ENCODE measurements at regions of chr6 and their contacts with region 1.

Region 1: DNA sequence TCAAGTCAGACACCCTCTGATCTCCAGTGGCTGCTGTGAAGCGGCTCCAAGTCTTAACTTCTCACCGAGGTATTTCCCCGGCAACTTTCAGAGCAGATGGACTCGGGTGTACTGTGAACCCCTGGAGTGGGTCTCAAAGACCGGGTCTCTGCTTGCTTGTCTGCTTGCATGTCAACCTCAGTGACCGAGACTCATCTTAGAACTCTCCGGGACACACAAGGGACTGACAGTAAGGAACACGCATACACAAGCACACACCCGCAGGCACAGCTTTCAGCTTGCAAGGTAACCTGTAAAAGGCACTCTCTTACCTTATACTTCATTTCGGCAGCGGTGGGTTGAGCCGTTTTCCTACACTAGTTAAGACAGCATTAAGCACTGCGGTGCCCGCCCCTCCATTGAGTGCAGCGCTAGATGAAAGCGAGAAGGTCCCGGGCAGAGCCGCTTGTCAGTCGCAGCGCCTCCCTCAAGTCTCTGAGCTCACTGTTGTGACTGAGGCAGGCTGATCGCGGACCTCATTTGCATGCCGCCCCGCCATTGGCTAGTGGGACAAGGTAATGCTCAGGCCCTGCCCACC is at the start of gene NEDD9:
- DNase-seq: peak; percentile 94 to 96
- H3K4me3 ChIP-seq: peak within 1 kb of the TSS; percentile 62
- H3K4me3 Mint-ChIP-seq: peak within 1 kb of the TSS; percentile 78
- H3K27ac Mint-ChIP-seq: peak within 1 kb of the TSS; percentile 85
- H3K4me1 ChIP-seq: peaks cover 32% of the 10 kb centered on the region
- H3K4me1 Mint-ChIP-seq: peaks cover 45% of the 10 kb centered on the region
- H3K27me3 ChIP-seq: no peaks in the 10 kb centered on the region
- H3K27me3 Mint-ChIP-seq: no peaks in the 10 kb centered on the region
- CTCF ChIP-seq: no peak
- total RNA-seq, gene NEDD9: 33.2 and 36.2 TPM in 2 replicates

Region 2: DNA sequence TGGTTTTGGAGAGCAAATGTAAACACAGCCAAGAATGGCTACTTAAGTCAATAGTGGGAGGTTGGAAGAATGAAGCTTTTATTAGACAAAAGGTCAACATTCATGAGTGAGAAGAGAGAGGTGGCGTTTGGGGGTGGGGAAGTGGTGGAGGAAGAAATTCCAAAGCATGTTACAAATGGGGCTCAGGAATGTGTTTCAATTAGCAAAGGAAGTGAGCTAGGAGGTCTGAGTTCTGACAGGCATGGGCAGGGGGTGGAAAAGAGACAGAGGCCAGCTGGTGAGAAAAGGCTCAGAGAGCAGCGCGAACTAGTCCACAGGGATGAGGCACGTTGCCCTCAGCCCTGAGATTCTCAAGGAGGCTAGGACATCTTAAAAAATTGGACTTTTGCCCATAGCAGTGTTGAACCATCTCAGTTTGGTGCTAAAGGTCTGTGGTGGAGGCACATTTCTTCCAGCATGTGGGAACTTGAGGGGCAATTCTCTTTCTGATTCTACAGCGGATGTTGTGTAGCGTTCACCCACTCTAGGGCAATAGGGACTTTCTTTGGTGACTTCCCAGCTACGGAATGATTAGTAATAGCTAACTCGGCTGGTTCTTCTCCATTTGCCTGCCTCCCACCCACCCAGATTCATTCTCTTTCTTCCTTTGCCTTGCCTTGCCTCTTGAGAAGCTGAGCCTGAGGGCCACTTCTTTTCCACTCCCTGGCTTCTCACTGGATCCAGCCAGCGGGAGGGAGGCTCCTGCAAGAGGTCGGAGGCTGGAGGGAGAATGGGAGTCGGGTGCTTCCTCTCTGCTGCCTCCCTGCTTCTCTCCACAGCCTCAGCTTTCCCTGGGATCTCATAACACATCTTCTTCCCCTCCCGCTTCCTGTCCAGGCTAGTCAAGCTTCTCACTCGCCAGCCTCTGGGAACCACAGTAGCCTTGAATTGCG is 45.3 kb after region 1 on chr6:
- CTCF ChIA-PET with region 1: no interaction called
- POLR2A ChIA-PET with region 1: interaction called, 13 read pairs
- intact Hi-C with region 1: loop called (anchors 1 kb)
- DNase-seq: peak; percentile 77 to 84
- H3K4me3 ChIP-seq: no peak overlapping the region
- H3K4me3 Mint-ChIP-seq: peak overlapping the region; percentile 15
- H3K27ac Mint-ChIP-seq: peak overlapping the region; percentile 95
- H3K4me1 ChIP-seq: peaks cover 38% of the 10 kb centered on the region
- H3K4me1 Mint-ChIP-seq: peaks cover 39% of the 10 kb centered on the region
- H3K27me3 ChIP-seq: no peaks in the 10 kb centered on the region
- H3K27me3 Mint-ChIP-seq: no peaks in the 10 kb centered on the region
- CTCF ChIP-seq: no peak

Region 3: DNA sequence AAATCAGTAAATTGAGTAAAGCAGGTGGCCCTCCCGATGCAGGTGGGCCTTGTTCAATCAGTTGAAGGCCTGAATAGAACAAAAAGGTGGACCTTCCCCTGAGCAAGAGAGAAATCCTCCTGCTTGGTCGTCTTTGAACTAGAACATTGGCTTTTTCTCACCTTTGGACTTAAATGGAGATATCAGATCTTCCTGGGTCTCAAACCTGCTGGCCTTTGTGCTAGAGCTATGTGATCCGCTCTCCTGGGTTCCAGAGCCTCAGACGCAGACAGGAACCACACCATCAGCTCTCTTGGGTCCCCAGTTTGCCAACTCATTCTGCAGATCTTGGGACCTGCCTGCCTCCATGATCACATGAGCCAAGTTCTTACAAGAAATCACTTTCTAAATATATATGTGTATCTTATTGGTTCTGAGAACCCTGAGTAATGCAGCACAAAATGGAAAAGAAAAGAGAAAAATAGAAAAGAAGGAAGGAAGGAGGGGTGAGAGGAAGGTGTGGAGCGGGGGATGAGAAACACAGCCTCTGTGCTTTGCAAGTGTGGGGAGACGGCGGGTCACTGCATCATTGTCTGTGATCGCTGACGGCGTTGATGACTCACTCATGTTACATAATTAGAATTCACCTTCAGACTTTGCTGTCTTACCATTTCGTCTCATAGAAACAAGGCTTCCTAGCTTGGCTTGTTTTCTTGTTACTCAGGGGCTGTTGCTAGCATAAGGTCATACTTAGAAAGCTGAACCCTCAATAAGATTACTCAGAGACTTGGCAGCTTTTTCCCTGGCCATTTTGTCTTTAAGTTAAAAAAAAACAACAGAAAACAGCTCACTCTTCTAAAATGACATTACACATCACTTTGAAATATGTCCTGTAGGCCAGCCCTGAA is 85.8 kb after region 1 on chr6:
- CTCF ChIA-PET with region 1: no interaction called
- POLR2A ChIA-PET with region 1: no interaction called
- intact Hi-C with region 1: loop called (anchors 1 kb)
- DNase-seq: peak; percentile 74 to 77
- H3K4me3 ChIP-seq: no peak overlapping the region
- H3K4me3 Mint-ChIP-seq: peak overlapping the region; percentile 30
- H3K27ac Mint-ChIP-seq: peak overlapping the region; percentile 65
- H3K4me1 ChIP-seq: peaks cover 31% of the 10 kb centered on the region
- H3K4me1 Mint-ChIP-seq: peaks cover 40% of the 10 kb centered on the region
- H3K27me3 ChIP-seq: no peaks in the 10 kb centered on the region
- H3K27me3 Mint-ChIP-seq: no peaks in the 10 kb centered on the region
- CTCF ChIP-seq: no peak

Region 4: DNA sequence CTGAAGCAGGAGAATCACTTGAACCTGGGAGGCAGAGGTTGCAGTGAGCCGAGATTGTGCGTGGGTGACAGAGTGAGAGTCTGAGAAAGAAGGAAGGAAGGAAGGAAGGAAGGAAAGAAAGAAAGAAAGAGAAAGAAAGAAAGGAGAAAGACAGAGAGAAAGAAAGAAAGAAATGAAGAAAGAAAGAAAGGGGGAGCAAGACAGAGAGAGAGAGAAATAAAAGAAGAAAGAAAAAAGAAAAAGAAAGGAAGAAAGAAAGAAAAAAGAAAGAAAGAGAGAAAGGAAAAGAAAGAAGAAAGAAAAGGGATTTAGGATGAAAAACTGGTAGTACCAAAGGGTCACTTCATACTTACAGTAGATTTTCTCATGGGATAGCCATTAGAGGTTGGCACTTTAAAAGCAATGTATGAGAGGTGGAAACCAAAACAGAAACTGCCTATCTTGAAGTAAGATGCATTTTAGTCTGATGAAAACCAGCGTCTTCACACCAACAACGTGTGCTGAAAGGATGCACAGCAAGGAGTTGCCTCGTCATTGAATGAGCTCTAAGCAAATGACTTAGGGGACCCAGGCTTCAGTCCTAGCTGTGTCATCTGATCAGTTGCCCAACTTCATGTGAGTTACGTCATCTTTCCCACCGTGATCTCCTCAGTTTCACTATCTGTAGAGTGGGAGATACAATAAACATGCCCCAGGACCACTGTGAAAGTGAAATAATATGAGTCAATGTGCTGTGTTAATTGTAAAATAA is 134.1 kb after region 1 on chr6:
- CTCF ChIA-PET with region 1: interaction called, 9 read pairs
- POLR2A ChIA-PET with region 1: interaction called, 29 read pairs
- intact Hi-C with region 1: loop called (anchors 1 kb)
- DNase-seq: no peak
- H3K4me3 ChIP-seq: no peak overlapping the region
- H3K4me3 Mint-ChIP-seq: peak overlapping the region; percentile 46
- H3K27ac Mint-ChIP-seq: peak overlapping the region; percentile 99
- H3K4me1 ChIP-seq: peaks cover 59% of the 10 kb centered on the region
- H3K4me1 Mint-ChIP-seq: peaks cover 51% of the 10 kb centered on the region
- H3K27me3 ChIP-seq: no peaks in the 10 kb centered on the region
- H3K27me3 Mint-ChIP-seq: no peaks in the 10 kb centered on the region
- CTCF ChIP-seq: no peak

Measured in Caco-2 (cell line).